ENCODE measurements at regions of chr15 and their contacts with region 1.

Region 1: GRCh38 chr15:69413822-69414700 is at the start of gene KIF23:
- DNase-seq: peak; percentile 87
- ATAC-seq: peak; percentile 98
- H3K4me3 ChIP-seq: peak within 1 kb of the TSS; percentile 77 to 98 (median 96)
- H3K27ac ChIP-seq: peak within 1 kb of the TSS; percentile 83
- H3K4me1 ChIP-seq: peaks cover 27% of the 10 kb centered on the region
- H3K27me3 ChIP-seq: no peaks in the 10 kb centered on the region
- CTCF ChIP-seq: 0 out of 2 replicates have a peak, but pooled peaks have one; percentile 3
- EP300 ChIP-seq: no peak
- POLR2A ChIP-seq: peak; percentile 63 to 64; a peak in 3 of 4 replicates
- RAD21 ChIP-seq: 0 out of 2 replicates have a peak, but pooled peaks have one; percentile 17
- total RNA-seq, gene KIF23: 38.1 and 51.2 TPM in 2 replicates

Region 2: GRCh38 chr15:68900027-68900426 is 514.0 kb before region 1 on chr15:
- CTCF ChIA-PET with region 1: no interaction called
- POLR2A ChIA-PET with region 1: no interaction called
- in situ Hi-C with region 1: no loop called
- intact Hi-C with region 1: no loop called
- DNase-seq: peak; percentile 52
- ATAC-seq: peak; percentile 90
- H3K4me3 ChIP-seq: peak overlapping the region in 1 of 3 experiments; percentile 31; a peak in 1 of 6 replicates
- H3K27ac ChIP-seq: no peak overlapping the region
- H3K4me1 ChIP-seq: peaks cover 15% of the 10 kb centered on the region
- H3K27me3 ChIP-seq: no peaks in the 10 kb centered on the region
- CTCF ChIP-seq: no peak
- EP300 ChIP-seq: peak in 1 of 2 experiments; percentile 38; a peak in 1 of 4 replicates
- POLR2A ChIP-seq: no peak
- RAD21 ChIP-seq: no peak

Region 3: DNA sequence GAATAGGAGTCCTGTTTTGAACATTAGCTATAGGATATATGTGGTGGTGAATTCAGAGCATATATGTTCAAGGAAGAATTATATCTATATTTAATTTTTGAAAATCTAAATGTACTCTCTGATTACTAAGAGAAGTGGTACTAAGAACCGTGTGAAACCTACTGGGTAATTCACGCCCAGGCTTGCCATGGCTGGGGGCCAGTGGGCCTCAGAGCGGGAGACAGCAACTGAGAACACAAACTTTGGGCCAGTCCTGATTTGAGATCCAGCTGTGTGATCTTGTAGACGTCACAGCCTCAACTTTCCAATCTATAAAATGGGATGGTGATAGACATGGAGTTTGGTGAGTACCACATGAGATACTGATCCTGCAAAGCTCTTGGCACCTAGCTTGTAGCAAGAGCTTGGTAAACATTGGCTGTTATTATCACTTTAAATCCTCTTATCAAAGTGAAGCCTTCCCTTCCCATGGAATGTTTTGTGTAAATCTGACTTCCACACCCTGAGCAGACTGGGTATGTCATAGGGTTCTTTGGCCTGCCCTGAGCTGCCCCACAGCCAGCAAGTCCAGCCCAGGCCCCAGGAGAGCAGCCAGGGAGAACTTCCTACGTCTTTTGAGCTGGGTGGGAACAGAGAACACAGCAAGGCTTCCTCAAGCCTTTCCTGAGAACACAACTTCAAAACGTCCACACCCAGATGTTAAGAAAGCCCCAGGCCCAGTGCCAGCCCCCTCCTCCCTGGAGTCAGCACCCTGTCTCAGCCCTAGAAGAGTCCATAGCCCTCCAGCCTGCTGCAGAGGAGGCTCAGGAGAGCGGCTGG is 123.5 kb before region 1 on chr15:
- CTCF ChIA-PET with region 1: no interaction called
- POLR2A ChIA-PET with region 1: no interaction called
- in situ Hi-C with region 1: no loop called
- intact Hi-C with region 1: no loop called
- DNase-seq: no peak
- ATAC-seq: no peak
- H3K4me3 ChIP-seq: no peak overlapping the region
- H3K27ac ChIP-seq: no peak overlapping the region
- H3K4me1 ChIP-seq: peaks cover 21% of the 10 kb centered on the region
- H3K27me3 ChIP-seq: peaks cover 0 to 31% of the 10 kb centered on the region in 2 experiments; a peak in 3 of 5 replicates
- CTCF ChIP-seq: no peak
- EP300 ChIP-seq: no peak
- POLR2A ChIP-seq: no peak
- RAD21 ChIP-seq: no peak

Region 4: DNA sequence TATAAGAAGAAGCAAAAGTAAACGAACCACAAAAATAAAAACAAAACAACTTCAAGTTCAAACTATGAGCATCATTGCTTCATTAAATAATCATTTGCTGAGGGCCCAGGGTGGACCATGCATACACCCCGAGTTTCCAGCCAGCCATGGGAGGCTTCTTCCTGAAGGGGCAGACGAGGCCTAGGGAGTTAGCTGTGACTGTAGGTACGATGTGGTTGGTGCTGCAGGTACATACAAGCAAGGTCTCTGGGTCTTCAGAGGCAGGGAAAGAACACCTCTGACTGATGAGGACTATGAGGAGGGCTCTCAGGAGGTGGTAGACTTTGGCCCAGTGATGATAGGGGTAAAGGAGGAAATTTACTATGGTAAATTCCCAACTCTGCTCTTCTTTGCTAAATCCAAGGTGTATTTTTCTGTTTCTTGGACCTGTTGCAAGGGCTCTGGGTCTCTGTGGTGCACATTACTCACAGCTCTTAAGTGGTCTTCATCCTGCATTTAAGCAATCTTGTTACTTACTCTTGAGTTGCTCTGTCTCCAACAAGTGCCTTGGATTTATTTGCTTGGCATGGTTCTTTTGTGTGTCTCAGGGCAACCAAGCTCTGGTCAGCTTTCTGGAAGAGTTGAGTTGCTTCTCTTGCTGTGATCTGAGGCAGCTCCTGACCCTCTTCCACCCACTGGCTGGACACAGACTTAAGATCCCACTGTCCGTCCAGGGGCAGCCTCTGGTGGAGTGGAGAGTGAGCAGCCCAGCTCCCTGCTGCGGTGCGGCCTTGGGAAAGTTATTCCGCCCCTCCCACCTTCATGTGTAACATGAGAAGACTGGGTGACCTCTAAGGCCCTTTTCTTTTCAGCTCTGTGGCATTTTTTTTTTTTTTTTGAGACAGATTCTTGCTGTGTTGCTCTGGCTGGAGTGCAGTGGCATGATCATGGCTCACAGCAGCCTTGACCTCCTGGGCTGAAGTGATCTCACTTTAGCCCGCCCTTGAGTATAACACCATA is 56.0 kb before region 1 on chr15:
- CTCF ChIA-PET with region 1: no interaction called
- POLR2A ChIA-PET with region 1: no interaction called
- in situ Hi-C with region 1: no loop called
- intact Hi-C with region 1: no loop called
- DNase-seq: peak; percentile 76
- ATAC-seq: peak; percentile 97
- H3K4me3 ChIP-seq: no peak overlapping the region
- H3K27ac ChIP-seq: no peak overlapping the region
- H3K4me1 ChIP-seq: peaks cover 25% of the 10 kb centered on the region
- H3K27me3 ChIP-seq: no peaks in the 10 kb centered on the region; a peak in 2 of 5 replicates
- CTCF ChIP-seq: no peak
- EP300 ChIP-seq: no peak
- POLR2A ChIP-seq: no peak
- RAD21 ChIP-seq: no peak

Region 5: DNA sequence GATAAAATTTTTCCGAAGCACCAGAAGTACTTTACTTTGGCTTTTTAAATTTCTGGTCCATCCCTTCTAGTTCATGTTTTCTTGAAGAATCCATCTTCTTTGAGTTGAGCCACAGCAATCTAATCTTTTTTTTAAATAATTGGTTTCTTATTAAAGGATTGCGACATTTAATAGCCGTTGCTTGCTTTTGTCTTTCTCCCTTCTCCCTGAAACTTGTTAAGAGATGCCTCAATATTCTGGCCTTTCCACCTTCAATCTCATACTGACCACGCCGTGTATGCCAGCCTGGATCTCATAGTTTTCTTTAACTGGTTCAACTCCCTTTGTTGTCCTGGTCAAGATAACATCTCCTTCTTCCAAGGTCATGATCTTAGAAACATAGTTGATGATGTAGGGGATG is 20.2 kb after region 1 on chr15:
- CTCF ChIA-PET with region 1: no interaction called
- POLR2A ChIA-PET with region 1: no interaction called
- in situ Hi-C with region 1: no loop called
- intact Hi-C with region 1: no loop called
- DNase-seq: no peak
- ATAC-seq: no peak
- H3K4me3 ChIP-seq: no peak overlapping the region
- H3K27ac ChIP-seq: no peak overlapping the region
- H3K4me1 ChIP-seq: no peaks in the 10 kb centered on the region
- H3K27me3 ChIP-seq: no peaks in the 10 kb centered on the region
- CTCF ChIP-seq: no peak
- EP300 ChIP-seq: no peak
- POLR2A ChIP-seq: no peak
- RAD21 ChIP-seq: no peak

Region 6: GRCh38 chr15:69452692-69453521 is 38.8 kb after region 1 on chr15 and contains the start of gene RPLP1:
- CTCF ChIA-PET with region 1: no interaction called
- POLR2A ChIA-PET with region 1: interaction called, 40 read pairs
- in situ Hi-C with region 1: no loop called
- intact Hi-C with region 1: loop called (anchors 5 kb)
- DNase-seq: peak; percentile 92
- ATAC-seq: peak; percentile 88
- H3K4me3 ChIP-seq: peak within 1 kb of the TSS; percentile 79 to 92 (median 89)
- H3K27ac ChIP-seq: peak within 1 kb of the TSS; percentile 98
- H3K4me1 ChIP-seq: peaks cover 27% of the 10 kb centered on the region
- H3K27me3 ChIP-seq: no peaks in the 10 kb centered on the region; a peak in 1 of 5 replicates
- CTCF ChIP-seq: no peak
- EP300 ChIP-seq: no peak
- POLR2A ChIP-seq: peak; percentile 99 to 100
- RAD21 ChIP-seq: no peak
- total RNA-seq, gene RPLP1: 797 and 817 TPM in 2 replicates

Measured in HepG2 (cell line).